Activated CD8-positive, alpha-beta T cell treated with anti-CD3 and anti-CD28 coated beads for 36 hours (primary cell): ENCODE measurements at regions of chr1 and their contacts with region 1.

Region 1: GRCh38 chr1:101178688-101179491 is 57.9 kb upstream of the S1PR1 start:
- DNase-seq: peak; percentile 63
- ATAC-seq: peak; percentile 75
- H3K4me3 Mint-ChIP-seq: peak overlapping the region; percentile 75
- H3K27ac Mint-ChIP-seq: peak overlapping the region; percentile 100
- H3K4me1 Mint-ChIP-seq: peaks cover 77% of the 10 kb centered on the region
- H3K27me3 Mint-ChIP-seq: no peaks in the 10 kb centered on the region
- CTCF ChIP-seq: no peak

Region 2: GRCh38 chr1:100866041-100866900 is 312.6 kb before region 1 on chr1:
- CTCF ChIA-PET with region 1: no interaction called
- POLR2A ChIA-PET with region 1: no interaction called
- intact Hi-C with region 1: no loop called
- DNase-seq: no peak
- ATAC-seq: no peak
- H3K4me3 Mint-ChIP-seq: no peak overlapping the region
- H3K27ac Mint-ChIP-seq: no peak overlapping the region
- H3K4me1 Mint-ChIP-seq: no peaks in the 10 kb centered on the region
- H3K27me3 Mint-ChIP-seq: no peaks in the 10 kb centered on the region
- CTCF ChIP-seq: peak; percentile 63

Region 3: DNA sequence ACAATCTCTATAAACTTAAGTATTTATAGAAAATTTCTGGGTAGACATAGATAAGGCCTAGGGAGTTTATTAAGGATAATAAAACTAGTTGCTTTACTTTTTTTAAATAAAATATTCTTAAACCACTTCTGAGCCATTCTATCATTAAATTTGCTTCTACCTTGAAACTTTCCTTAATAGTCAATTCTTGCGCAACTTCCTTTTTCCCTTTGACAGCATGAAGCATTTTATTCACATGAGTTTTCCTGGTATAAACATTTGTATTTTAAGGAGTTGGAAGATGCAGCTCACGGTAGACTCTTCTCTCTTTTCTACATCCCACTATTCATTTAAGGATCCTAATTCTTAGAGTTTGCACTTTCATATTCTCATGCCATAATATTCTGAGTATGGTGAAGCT is 77.5 kb before region 1 on chr1:
- CTCF ChIA-PET with region 1: no interaction called
- POLR2A ChIA-PET with region 1: no interaction called
- intact Hi-C with region 1: no loop called
- DNase-seq: no peak
- ATAC-seq: no peak
- H3K4me3 Mint-ChIP-seq: no peak overlapping the region
- H3K27ac Mint-ChIP-seq: no peak overlapping the region
- H3K4me1 Mint-ChIP-seq: peaks cover 6% of the 10 kb centered on the region
- H3K27me3 Mint-ChIP-seq: no peaks in the 10 kb centered on the region
- CTCF ChIP-seq: no peak

Region 4: DNA sequence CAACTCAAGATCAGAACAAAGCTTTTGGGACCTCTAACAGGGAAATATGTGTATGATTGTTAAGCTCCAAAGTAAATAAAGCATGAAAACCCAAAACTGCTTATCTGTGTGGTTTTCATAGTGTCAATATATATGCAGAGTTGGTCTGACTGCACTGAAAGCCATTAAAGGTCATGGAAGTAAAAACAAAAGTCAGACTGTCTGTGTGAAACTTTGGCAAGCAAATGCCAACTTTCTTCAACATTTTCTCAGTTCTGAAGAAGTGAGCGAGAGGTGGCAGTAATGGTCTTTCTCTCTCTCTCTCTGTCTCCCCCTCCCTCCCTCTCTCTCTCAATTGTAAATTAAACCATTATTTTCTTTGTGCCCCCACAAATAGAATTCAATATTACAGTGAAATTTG is 42.2 kb before region 1 on chr1:
- CTCF ChIA-PET with region 1: interaction called, 6 read pairs
- POLR2A ChIA-PET with region 1: interaction called, 6 read pairs
- intact Hi-C with region 1: loop called (anchors 1 kb)
- DNase-seq: peak; percentile 59
- ATAC-seq: peak; percentile 85
- H3K4me3 Mint-ChIP-seq: peak overlapping the region; percentile 33
- H3K27ac Mint-ChIP-seq: peak overlapping the region; percentile 80
- H3K4me1 Mint-ChIP-seq: peaks cover 64% of the 10 kb centered on the region
- H3K27me3 Mint-ChIP-seq: no peaks in the 10 kb centered on the region
- CTCF ChIP-seq: peak; percentile 56

Region 5: DNA sequence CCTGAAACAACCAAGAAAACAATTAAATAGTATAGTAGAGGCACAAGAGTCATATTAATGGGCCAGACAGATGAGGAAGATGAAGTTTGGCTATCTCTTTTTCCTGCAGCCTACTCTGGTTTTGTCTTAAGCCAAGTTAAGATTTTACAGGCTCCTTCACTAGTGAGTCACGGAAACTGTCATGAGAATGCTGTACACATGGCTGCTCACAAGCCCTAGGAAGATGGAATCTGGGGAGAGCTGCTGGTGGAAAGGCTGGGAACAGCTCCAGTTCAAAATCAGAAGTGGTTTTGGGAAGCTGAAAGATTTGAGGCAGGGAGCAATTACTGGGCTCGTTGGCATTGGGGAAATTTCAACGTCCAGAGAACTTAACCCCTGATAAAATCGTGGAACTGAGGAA is 11.6 kb after region 1 on chr1:
- CTCF ChIA-PET with region 1: interaction called, 5 read pairs
- POLR2A ChIA-PET with region 1: interaction called, 10 read pairs
- intact Hi-C with region 1: no loop called
- DNase-seq: no peak
- ATAC-seq: no peak
- H3K4me3 Mint-ChIP-seq: no peak overlapping the region
- H3K27ac Mint-ChIP-seq: no peak overlapping the region
- H3K4me1 Mint-ChIP-seq: peaks cover 26% of the 10 kb centered on the region
- H3K27me3 Mint-ChIP-seq: no peaks in the 10 kb centered on the region
- CTCF ChIP-seq: no peak

Region 6: DNA sequence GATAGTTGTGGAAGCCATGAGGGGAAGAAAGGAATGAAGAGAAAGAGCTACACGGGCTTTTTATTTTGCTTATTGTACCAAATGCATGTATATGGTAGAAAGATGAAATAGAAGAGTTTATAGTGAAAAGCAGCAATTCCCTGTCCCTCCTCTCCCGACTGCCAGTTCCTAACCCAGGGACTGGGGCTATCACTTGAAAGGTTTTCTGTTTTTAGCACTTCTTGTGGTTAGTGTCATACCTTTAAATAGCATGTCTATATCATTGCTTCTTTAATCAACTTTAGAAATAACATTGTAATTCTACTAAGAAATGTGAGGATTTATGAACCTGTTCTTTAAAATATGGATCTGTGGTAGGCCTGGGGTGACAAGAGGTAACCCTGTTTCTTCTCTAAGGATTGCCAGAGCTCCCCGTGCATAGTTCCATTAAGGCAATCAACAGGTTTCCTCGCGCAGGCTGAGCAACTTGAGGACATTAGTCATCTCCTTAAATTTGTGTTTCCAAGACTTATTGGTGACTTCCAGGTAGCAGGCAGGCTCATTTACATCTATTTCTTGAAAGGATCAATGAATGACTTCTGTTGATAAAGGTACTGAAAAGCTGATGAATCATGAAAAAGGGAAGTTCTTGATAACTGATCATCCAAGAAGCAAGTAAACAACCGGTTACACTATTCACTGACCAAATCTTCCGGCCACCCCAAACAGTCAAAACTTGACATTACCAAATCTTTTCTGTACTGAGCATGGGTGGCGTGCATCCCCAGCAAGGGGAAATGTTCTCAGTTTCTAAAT is 20.1 kb after region 1 on chr1:
- CTCF ChIA-PET with region 1: interaction called, 4 read pairs
- POLR2A ChIA-PET with region 1: interaction called, 14 read pairs
- intact Hi-C with region 1: no loop called
- DNase-seq: peak; percentile 81
- ATAC-seq: peak; percentile 85
- H3K4me3 Mint-ChIP-seq: peak overlapping the region; percentile 20
- H3K27ac Mint-ChIP-seq: peak overlapping the region; percentile 89
- H3K4me1 Mint-ChIP-seq: peaks cover 24% of the 10 kb centered on the region
- H3K27me3 Mint-ChIP-seq: no peaks in the 10 kb centered on the region
- CTCF ChIP-seq: no peak

Region 7: DNA sequence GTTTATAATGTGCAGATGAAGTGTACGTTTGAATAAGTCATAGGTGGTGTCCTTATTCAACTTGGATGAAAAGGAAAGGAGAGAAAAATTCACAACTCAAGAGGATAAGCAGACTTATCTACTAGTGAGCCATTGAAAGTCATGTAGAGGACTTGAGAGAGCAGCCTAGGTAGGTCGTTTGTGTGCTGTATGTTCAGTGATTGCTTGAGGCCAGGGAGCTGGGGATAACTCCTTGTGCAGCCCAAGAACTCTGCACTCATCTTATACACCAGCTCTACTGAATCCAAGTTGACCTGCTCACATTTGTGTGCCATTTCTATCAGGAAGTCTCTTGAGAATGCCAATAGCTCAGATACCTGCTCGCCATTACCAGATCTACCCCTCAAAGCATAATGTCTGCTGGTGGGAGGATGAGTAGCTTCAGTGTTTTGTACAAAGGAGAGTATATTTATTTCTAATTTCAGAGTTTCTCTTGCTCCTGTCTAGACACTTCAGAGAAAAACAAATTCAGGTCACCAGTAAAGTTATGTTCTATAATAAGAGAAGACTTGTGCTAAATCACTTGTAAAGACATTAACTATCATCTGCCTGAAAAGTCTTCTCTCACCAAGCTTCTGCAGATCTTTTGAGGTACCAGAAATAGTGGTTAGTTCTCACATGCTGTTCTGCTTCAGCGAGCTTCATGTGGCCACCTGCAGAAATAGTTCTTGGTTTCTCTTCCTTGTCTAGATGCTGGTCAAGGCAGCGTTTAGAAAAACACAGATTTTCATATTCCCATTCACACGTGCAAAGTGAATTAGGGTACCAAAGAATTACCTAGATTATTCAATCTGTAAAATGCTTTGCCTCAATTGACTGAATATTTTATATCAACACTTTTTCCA is 68.8 kb after region 1 on chr1:
- CTCF ChIA-PET with region 1: no interaction called
- POLR2A ChIA-PET with region 1: interaction called, 11 read pairs
- intact Hi-C with region 1: no loop called
- DNase-seq: no peak
- ATAC-seq: no peak
- H3K4me3 Mint-ChIP-seq: peak overlapping the region; percentile 1
- H3K27ac Mint-ChIP-seq: peak overlapping the region; percentile 44
- H3K4me1 Mint-ChIP-seq: peaks cover 64% of the 10 kb centered on the region
- H3K27me3 Mint-ChIP-seq: no peaks in the 10 kb centered on the region
- CTCF ChIP-seq: no peak